ENCODE measurements at regions of chr1 and their contacts with region 1.

Region 1: GRCh38 chr1:115189814-115190539 is 100.7 kb upstream of the TSPAN2 start:
- DNase-seq: peak; percentile 90
- H3K4me3 ChIP-seq: no peak overlapping the region
- H3K27ac ChIP-seq: peak overlapping the region; percentile 78
- H3K4me1 ChIP-seq: peaks cover 27% of the 10 kb centered on the region
- H3K27me3 ChIP-seq: no peaks in the 10 kb centered on the region
- CTCF ChIP-seq: no peak

Region 2: GRCh38 chr1:115210302-115210711 is 20.3 kb after region 1 on chr1:
- CTCF ChIA-PET with region 1: no interaction called
- dilution Hi-C with region 1: no loop called
- in situ Hi-C with region 1: no loop called
- intact Hi-C with region 1: loop called (anchors 2 kb)
- DNase-seq: peak; percentile 81
- H3K4me3 ChIP-seq: no peak overlapping the region
- H3K27ac ChIP-seq: no peak overlapping the region
- H3K4me1 ChIP-seq: peaks cover 19% of the 10 kb centered on the region
- H3K27me3 ChIP-seq: no peaks in the 10 kb centered on the region
- CTCF ChIP-seq: no peak